ENCODE measurements at regions of chr9 and their contacts with region 1.

Region 1: GRCh38 chr9:29211580-29212396 is 1638.5 kb upstream of the C9orf72 start:
- DNase-seq: peak; percentile 67
- H3K4me3 ChIP-seq: peak overlapping the region; percentile 66 to 98 (median 71)
- H3K27ac ChIP-seq: peak overlapping the region; percentile 44
- H3K4me1 ChIP-seq: peaks cover 20% of the 10 kb centered on the region
- H3K27me3 ChIP-seq: peaks cover 5% of the 10 kb centered on the region
- CTCF ChIP-seq: peak; percentile 60 to 81

Region 2: DNA sequence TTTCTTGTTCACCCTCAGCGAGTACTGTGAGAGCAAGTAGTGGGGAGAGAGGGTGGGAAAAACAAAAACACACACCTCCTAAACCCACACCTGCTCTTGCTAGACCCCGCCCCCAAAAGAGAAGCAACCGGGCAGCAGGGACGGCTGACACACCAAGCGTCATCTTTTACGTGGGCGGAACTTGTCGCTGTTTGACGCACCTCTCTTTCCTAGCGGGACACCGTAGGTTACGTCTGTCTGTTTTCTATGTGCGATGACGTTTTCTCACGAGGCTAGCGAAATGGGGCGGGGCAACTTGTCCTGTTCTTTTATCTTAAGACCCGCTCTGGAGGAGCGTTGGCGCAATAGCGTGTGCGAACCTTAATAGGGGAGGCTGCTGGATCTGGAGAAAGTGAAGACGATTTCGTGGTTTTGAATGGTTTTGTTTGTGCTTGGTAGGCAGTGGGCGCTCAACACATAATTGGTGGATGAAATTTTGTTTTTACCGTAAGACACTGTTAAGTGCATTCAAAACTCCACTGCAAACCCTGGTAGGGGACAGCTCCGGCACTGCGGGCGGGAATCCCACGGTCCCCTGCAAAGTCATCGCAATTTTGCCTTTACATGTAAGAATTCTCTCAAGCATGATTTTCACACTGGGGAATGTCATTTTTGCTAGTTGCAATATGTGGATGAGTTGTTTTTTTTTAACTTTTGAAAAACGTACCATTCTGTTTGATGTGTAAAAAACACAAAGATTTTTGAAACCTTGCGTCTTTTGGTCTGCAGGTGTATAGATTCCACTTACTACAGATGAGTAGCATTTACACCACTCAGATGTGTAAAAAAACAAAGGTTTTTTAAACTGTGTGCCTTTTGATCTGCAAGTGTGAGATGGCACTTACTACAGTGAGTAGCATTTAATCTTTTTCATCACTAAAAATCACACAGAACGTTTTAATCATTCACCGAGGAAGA is 1637.9 kb before region 1 on chr9:
- CTCF ChIA-PET with region 1: no interaction called
- dilution Hi-C with region 1: no loop called
- in situ Hi-C with region 1: no loop called
- intact Hi-C with region 1: loop called (anchors 2 kb)
- DNase-seq: peak; percentile 99
- H3K4me3 ChIP-seq: peak overlapping the region; percentile 60 to 77 (median 76)
- H3K27ac ChIP-seq: peak overlapping the region; percentile 74
- H3K4me1 ChIP-seq: peaks cover 13% of the 10 kb centered on the region
- H3K27me3 ChIP-seq: no peaks in the 10 kb centered on the region
- CTCF ChIP-seq: no peak

Region 3: DNA sequence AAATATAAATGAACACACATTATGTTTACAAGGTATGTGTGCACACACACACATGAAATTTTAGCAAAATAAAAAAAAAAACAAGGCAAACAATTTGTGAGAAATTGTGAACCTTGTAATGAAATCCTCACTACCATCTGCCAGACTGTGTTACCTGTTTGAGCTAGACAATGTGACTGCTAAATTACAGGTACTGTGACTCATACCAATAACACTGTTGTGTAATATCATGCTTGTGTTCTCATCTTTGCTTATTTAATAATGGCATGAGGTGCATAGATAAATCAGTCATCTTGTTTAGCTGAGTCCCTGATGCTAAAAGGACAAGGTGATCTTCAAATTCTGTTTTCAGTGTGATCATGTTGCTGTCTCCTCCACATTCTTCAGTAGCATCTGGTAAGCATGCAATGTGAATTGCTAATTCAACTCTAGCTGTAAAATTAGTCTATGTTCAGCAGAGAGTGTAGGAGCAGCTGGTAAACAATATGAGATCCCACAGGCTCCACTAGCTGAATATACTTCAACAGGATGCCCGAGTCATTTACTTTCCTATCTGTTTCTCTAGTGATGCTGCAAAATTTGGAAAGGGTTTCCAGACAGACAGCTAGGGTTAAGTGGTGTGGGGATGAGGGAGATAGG is 672.2 kb before region 1 on chr9:
- CTCF ChIA-PET with region 1: no interaction called
- dilution Hi-C with region 1: no loop called
- in situ Hi-C with region 1: no loop called
- intact Hi-C with region 1: loop called (anchors 5 kb)
- DNase-seq: peak; percentile 80
- H3K4me3 ChIP-seq: no peak overlapping the region
- H3K27ac ChIP-seq: no peak overlapping the region
- H3K4me1 ChIP-seq: peaks cover 4% of the 10 kb centered on the region
- H3K27me3 ChIP-seq: no peaks in the 10 kb centered on the region
- CTCF ChIP-seq: no peak

Region 4: GRCh38 chr9:28774416-28775235 is 437.2 kb before region 1 on chr9:
- CTCF ChIA-PET with region 1: interaction called, 7 read pairs
- dilution Hi-C with region 1: no loop called
- in situ Hi-C with region 1: loop called (anchors 10 to 25 kb)
- intact Hi-C with region 1: loop called (anchors 1 kb)
- DNase-seq: peak; percentile 36
- H3K4me3 ChIP-seq: no peak overlapping the region
- H3K27ac ChIP-seq: no peak overlapping the region
- H3K4me1 ChIP-seq: peaks cover 6% of the 10 kb centered on the region
- H3K27me3 ChIP-seq: no peaks in the 10 kb centered on the region
- CTCF ChIP-seq: peak; percentile 67 to 69

Region 5: GRCh38 chr9:28801144-28801799 is 410.5 kb before region 1 on chr9:
- CTCF ChIA-PET with region 1: no interaction called
- dilution Hi-C with region 1: no loop called
- in situ Hi-C with region 1: no loop called
- intact Hi-C with region 1: no loop called
- DNase-seq: peak; percentile 69
- H3K4me3 ChIP-seq: no peak overlapping the region
- H3K27ac ChIP-seq: no peak overlapping the region
- H3K4me1 ChIP-seq: peaks cover 10% of the 10 kb centered on the region
- H3K27me3 ChIP-seq: no peaks in the 10 kb centered on the region
- CTCF ChIP-seq: no peak

Region 6: GRCh38 chr9:28951944-28952343 is 259.8 kb before region 1 on chr9:
- CTCF ChIA-PET with region 1: no interaction called
- dilution Hi-C with region 1: no loop called
- in situ Hi-C with region 1: no loop called
- intact Hi-C with region 1: loop called (anchors 5 kb)
- DNase-seq: no peak
- H3K4me3 ChIP-seq: no peak overlapping the region
- H3K27ac ChIP-seq: no peak overlapping the region
- H3K4me1 ChIP-seq: no peaks in the 10 kb centered on the region
- H3K27me3 ChIP-seq: no peaks in the 10 kb centered on the region
- CTCF ChIP-seq: peak in 1 of 2 donors; percentile 7

Region 7: DNA sequence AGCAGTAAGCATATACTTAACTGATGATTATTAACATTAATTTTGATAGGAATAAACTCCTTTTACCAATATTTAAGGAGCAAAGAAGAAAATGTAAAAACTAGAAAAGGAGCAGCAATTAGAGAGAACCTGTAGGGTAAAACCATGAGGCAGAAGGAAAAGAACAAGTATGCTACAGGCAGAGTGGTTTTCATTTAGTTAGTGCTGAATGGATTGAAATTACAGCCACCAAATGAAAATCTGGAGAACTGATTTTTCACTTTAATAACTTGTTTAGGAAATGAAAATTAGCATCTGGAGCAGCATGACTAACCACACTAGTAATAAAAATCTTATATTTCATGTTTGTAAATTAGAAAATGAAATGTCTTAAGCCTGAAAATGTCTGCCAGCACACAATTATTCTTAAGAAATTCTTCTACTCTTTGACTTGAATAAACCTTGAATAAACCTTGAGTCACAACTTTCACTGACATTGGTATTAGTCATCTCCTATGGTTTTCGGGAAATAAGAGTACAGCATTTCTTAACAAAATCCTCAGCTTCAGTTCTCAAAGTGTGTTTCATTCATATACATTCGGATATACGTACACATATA is 133.6 kb before region 1 on chr9:
- CTCF ChIA-PET with region 1: no interaction called
- dilution Hi-C with region 1: no loop called
- in situ Hi-C with region 1: no loop called
- intact Hi-C with region 1: loop called (anchors 5 kb)
- DNase-seq: peak; percentile 82
- H3K4me3 ChIP-seq: peak overlapping the region in 2 of 3 experiments; percentile 13 to 29
- H3K27ac ChIP-seq: peak overlapping the region; percentile 68
- H3K4me1 ChIP-seq: peaks cover 12% of the 10 kb centered on the region
- H3K27me3 ChIP-seq: no peaks in the 10 kb centered on the region
- CTCF ChIP-seq: no peak

Region 8: GRCh38 chr9:29691758-29692407 is 480.1 kb after region 1 on chr9:
- CTCF ChIA-PET with region 1: no interaction called
- dilution Hi-C with region 1: no loop called
- in situ Hi-C with region 1: no loop called
- intact Hi-C with region 1: loop called (anchors 1 kb)
- DNase-seq: peak; percentile 48
- H3K4me3 ChIP-seq: no peak overlapping the region
- H3K27ac ChIP-seq: no peak overlapping the region
- H3K4me1 ChIP-seq: no peaks in the 10 kb centered on the region
- H3K27me3 ChIP-seq: no peaks in the 10 kb centered on the region
- CTCF ChIP-seq: peak; percentile 44 to 70

Measured in mammary epithelial cell (primary cell).